ENCODE measurements at regions of chr1 and their contacts with region 1.

Region 1: DNA sequence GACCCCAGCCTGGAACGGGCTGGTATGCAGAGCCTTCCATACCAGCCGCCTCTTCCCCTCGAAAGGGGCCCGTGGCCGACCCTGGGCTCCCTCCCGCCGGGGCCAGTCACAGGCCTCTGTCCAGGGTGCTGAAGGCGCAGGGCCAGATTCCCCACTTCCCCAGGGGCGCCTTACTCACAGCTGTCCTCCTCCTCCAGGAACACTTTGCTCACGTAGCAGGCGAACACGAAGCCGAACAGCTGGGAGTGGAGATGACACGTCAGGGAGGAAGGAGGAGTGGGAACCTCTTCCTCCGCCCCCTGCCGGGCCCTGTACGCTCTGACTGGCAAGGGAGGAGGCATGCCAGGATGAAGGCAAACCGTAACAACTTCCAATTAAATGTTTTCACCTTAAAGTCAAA is 57.3 kb downstream of the NKAIN1 start:
- DNase-seq: peak; percentile 90
- ATAC-seq: peak; percentile 70
- H3K4me3 Mint-ChIP-seq: peak overlapping the region; percentile 69
- H3K27ac Mint-ChIP-seq: no peak overlapping the region
- H3K4me1 Mint-ChIP-seq: 0 out of 2 replicates have a peak, but pooled peaks cover 2% of the 10 kb centered on the region
- H3K27me3 Mint-ChIP-seq: 0 out of 2 replicates have a peak, but pooled peaks cover 4% of the 10 kb centered on the region
- CTCF ChIP-seq: no peak

Region 2: DNA sequence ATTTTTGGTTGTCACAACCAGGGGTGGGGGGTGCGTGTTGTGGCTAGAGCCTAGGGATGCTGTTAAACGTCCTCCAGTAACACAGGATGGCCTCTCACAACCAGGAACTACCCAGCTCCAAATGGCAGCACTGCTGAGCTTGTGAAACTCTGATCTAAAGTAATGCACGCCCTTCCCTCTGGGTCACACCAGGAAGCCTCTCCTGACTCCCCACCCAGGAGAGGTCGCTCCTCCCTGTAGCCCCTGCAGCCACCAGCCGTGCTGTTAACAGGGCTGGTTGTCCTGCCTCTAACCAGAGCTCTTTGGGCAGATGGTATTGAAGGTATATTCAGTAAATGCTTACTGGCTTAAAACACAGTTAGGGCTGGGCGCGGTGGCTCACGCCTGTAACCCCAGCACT is 15.9 kb before region 1 on chr1:
- CTCF ChIA-PET with region 1: interaction called, 34 read pairs
- POLR2A ChIA-PET with region 1: no interaction called
- DNase-seq: no peak
- ATAC-seq: 0 out of 2 replicates have a peak, but pooled peaks have one; percentile 4
- H3K4me3 Mint-ChIP-seq: no peak overlapping the region
- H3K27ac Mint-ChIP-seq: no peak overlapping the region
- H3K4me1 Mint-ChIP-seq: peaks cover 17% of the 10 kb centered on the region
- H3K27me3 Mint-ChIP-seq: no peaks in the 10 kb centered on the region
- CTCF ChIP-seq: no peak

Region 3: DNA sequence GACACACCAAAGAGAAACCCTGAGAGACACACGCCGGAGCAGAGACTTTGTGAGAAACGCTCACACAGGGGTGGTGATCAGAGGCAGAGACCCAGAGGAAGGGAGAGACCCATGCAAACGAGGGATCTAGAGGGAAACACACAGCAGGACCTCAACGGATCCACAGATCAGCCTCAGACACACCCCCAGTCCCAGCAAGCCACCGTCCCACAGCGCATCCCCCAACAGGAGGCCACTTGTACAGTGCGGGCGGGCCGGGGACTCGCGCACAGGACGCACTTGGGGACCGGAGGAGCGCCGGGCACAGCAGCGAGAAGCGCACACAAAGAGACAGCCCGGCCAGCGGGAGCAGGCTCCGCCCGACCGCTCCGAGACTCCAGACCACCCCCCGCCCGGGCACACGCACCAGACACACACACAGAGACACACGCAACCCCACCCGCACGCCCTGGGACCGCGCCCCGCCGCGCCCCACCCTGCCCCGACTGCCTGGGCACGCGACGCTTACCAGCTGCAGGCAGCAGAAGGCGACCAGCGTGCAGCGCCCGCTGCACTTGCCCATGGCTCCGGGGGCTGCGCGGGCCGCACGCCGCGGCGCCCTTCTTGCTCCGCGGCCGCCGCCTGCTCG is 56.7 kb after region 1 on chr1:
- CTCF ChIA-PET with region 1: interaction called, 10 read pairs
- POLR2A ChIA-PET with region 1: no interaction called
- DNase-seq: peak; percentile 55
- ATAC-seq: peak; percentile 68
- H3K4me3 Mint-ChIP-seq: peak overlapping the region; percentile 75
- H3K27ac Mint-ChIP-seq: no peak overlapping the region
- H3K4me1 Mint-ChIP-seq: peaks cover 23% of the 10 kb centered on the region
- H3K27me3 Mint-ChIP-seq: peaks cover 26% of the 10 kb centered on the region
- CTCF ChIP-seq: no peak

Region 4: DNA sequence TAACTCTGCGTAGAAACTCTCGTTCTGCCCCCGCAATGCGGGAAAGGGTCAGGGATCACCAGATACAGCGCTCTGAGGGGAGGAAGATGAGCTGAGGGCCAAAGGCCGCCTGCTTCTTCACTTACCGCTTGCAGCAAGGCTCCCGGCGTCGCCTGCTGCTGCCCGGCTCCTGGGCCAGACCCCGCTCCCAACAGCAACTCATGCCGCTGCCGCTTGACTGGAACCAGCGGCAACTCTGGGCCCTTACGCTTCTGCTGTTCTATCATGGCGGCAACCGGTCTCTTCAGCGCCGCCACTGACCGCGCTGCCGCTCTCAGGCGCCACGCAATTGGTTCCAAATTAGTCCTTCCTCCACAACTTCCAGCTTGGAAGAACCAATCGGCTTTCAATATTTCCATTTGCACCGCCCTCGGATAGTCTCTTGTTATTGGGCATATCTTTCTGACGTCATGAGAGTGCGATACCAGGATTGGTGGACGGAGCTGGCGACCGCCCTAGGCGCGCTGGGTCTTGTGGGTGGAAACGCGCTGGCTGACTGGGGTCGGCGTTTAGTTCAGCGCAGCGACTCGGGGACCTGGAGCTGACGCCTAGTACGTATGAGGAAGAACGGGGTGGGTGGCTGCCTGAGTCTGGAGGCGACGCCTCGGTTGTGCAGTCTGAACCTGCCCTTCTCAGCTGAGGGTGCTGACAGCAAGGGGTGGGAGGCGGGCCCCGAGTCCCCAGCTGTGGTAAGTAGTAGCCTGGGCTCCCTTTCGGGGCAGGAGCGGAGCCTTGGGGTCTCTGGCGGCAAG is 114.3 kb after region 1 on chr1 and contains the starts of genes SNRNP40 and ZCCHC17:
- CTCF ChIA-PET with region 1: interaction called, 25 read pairs
- POLR2A ChIA-PET with region 1: interaction called, 9 read pairs
- DNase-seq: peak; percentile 95
- ATAC-seq: peak; percentile 98
- H3K4me3 Mint-ChIP-seq: no peak within 1 kb of the TSS
- H3K27ac Mint-ChIP-seq: no peak within 1 kb of the TSS; the same call in 1 of the 2 replicates
- H3K4me1 Mint-ChIP-seq: peaks cover 15% of the 10 kb centered on the region
- H3K27me3 Mint-ChIP-seq: no peaks in the 10 kb centered on the region
- CTCF ChIP-seq: no peak
- total RNA-seq, gene SNRNP40: 102 to 103 TPM (median 103 TPM) in 3 replicates
- total RNA-seq, gene ZCCHC17: 40.6 to 42.0 TPM (median 40.7 TPM) in 3 replicates

Region 5: DNA sequence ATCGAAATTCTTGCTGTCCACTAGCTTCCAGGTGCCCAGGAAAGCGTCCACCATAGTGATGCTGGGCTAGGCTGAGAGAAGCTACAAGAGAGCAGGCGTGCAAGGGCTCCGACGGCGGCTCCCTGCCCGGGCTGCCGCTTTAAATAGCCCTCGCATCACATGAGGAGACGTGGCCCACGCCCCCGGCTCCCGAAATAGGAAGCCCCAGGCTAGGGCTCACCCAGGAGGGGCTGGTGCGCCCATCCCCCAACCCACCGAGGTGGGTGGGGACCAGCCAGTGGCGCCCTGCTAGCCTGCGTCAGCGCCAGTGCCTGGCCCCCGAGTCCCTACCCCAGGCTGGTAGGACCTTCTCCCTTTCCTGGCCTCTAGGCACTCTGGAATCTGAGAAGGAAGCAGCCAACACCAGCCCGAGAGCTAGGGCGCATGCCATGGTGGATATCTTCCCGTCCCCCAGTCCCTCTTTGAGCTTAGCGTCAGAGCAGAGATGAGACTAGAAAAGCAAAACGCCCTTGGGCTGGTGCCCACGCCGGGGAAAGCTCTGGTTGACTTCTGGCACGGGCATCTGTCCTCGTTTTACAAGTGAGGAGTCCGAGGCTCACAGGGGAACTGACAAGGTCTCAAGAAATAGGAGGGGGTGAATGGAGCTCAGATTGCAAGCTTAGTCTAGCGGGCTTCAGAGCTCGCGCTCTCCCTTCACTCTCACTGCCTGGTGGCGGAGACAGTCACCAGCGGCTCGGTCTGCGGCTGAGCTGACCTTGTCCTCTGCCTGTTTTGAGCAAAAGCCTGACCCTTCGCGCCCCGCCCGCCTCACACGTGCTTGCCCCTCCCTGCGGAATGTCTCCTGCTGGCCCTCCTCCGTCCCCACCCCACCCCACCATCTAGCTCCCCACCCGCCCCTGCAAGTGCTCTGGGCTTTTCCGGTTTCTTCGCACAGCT is 190.9 kb after region 1 on chr1 and contains the start of gene FABP3:
- CTCF ChIA-PET with region 1: interaction called, 25 read pairs
- POLR2A ChIA-PET with region 1: interaction called, 3 read pairs
- DNase-seq: peak; percentile 95
- ATAC-seq: peak; percentile 72
- H3K4me3 Mint-ChIP-seq: peak within 1 kb of the TSS; percentile 70
- H3K27ac Mint-ChIP-seq: peak within 1 kb of the TSS; percentile 94
- H3K4me1 Mint-ChIP-seq: peaks cover 52% of the 10 kb centered on the region
- H3K27me3 Mint-ChIP-seq: peaks cover 4% of the 10 kb centered on the region
- CTCF ChIP-seq: no peak
- total RNA-seq, gene FABP3: 18.0 to 25.0 TPM (median 19.0 TPM) in 3 replicates